ENCODE measurements at regions of chr2 and their contacts with region 1.

Region 1: DNA sequence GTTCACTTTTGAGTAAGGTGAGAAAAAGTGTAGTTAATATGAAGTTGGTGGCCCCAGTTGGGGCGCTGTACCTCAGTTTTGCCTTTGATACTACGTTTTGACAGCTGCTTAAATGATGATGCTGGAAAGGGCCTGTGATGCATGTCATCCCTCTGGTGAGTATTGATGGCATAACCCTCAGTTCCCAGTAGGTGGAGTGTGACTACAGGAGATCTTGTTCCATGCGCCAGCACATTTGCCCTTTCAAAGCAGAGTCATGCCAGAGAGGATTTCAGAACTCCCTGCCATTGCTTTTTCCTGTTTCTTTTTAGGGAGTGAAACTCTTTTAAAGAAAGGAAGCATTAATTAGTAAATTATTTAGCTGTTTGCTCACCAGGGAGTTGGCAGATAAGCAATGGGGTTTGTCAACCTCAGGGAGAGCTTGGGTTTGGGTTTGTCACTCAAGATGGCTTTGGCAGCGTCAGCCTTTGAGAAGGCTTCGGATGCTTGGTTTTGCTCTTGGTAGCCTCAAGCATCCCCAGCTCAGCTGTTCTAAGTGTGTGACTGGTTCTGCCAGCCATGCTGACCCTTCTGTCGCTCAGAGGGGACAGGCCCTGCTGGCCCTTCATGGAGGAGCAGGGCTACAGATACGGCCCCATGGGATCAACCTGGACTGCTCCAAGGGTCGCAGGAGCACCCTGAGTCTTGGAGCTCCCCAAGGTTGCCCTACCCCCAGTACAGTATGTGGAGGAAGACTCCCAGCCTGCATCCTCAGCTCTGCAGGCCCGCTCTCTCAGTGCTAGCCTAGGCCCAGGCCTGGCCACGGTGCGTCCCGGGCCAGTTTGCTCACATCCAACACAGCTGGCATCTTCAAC is 29.1 kb downstream of the ARMC9 start:
- DNase-seq: peak; percentile 70 to 76 (median 73)
- ATAC-seq: peak; percentile 98
- H3K4me3 ChIP-seq: no peak overlapping the region
- H3K27ac ChIP-seq: no peak overlapping the region
- H3K4me1 ChIP-seq: no peaks in the 10 kb centered on the region
- H3K27me3 ChIP-seq: no peaks in the 10 kb centered on the region
- CTCF ChIP-seq: peak; percentile 76 to 85 (median 77)
- EP300 ChIP-seq: no peak
- POLR2A ChIP-seq: no peak
- RAD21 ChIP-seq: peak; percentile 79 to 91

Region 2: GRCh38 chr2:231084565-231084964 is 143.0 kb before region 1 on chr2:
- CTCF ChIA-PET with region 1: no interaction called
- POLR2A ChIA-PET with region 1: no interaction called
- in situ Hi-C with region 1: no loop called
- intact Hi-C with region 1: no loop called
- DNase-seq: no peak
- ATAC-seq: no peak
- H3K4me3 ChIP-seq: no peak overlapping the region
- H3K27ac ChIP-seq: no peak overlapping the region
- H3K4me1 ChIP-seq: no peaks in the 10 kb centered on the region
- H3K27me3 ChIP-seq: no peaks in the 10 kb centered on the region
- CTCF ChIP-seq: no peak
- EP300 ChIP-seq: no peak
- POLR2A ChIP-seq: no peak
- RAD21 ChIP-seq: no peak

Region 3: DNA sequence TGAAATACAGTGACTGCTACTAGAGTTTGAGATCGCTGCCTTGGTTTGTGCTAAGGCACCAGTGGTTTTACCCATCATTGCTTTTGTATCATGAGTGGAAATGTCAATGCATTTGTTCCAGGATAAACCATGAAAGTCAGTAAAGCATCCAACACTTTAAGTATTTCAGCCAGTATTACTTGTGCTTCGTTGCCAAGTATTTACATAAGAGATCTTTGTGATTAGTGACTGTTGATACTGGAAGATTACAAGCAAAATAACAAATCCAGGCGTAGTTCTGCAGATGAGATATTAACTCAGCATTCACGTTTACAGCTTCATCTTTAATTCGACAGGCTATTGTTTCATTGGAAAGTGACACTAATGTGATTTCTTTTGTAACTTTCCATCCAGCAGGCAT is 77.7 kb after region 1 on chr2:
- CTCF ChIA-PET with region 1: no interaction called
- POLR2A ChIA-PET with region 1: no interaction called
- in situ Hi-C with region 1: no loop called
- intact Hi-C with region 1: loop called (anchors 2 kb)
- DNase-seq: no peak
- ATAC-seq: no peak
- H3K4me3 ChIP-seq: no peak overlapping the region
- H3K27ac ChIP-seq: no peak overlapping the region
- H3K4me1 ChIP-seq: no peaks in the 10 kb centered on the region
- H3K27me3 ChIP-seq: peaks cover 9 to 24% of the 10 kb centered on the region in 2 experiments; a peak in 3 of 5 replicates
- CTCF ChIP-seq: no peak
- EP300 ChIP-seq: no peak
- POLR2A ChIP-seq: no peak
- RAD21 ChIP-seq: no peak

Region 4: DNA sequence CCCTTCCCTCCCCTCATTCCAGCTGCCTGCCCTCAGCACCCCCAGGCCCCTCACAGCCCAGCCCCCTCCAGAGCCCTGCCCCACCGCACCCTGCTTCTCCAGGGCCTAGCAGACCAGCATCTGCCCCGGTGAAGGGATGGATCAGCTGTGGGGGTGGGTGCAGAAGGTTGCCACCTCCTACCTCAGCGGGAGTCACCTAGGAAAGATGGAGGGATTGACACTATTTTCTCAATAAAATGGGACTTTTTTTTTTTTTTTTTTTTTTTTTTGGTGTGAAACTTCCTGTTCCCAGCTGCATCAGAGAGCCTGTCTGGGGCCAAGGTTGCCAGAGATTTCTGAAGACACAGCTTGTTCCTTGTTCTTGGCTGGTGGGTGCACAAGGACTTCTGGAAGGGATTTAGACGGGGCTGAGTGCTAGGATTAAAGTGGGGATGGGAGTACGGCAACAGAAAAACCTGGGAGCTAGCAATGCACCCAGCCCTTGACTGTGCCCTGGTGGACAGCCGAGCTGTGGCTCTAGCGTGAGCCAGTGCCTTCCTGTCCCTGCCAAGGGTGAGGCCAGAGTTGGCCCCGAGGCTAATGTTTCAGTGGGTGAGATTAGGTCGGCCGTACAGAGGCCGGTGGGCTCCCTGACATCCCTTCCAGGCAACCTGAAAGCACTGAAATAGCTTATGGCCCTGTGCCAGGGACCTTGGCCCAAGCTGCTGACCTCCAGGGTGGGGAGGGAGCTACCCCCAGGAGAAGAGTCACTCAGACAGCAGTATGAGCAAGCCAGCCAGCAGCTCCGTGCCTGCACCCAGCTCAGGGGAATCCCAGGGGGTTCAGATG is 172.5 kb after region 1 on chr2:
- CTCF ChIA-PET with region 1: no interaction called
- POLR2A ChIA-PET with region 1: no interaction called
- in situ Hi-C with region 1: no loop called
- intact Hi-C with region 1: loop called (anchors 5 kb)
- DNase-seq: peak in 1 of 4 experiments; percentile 36
- ATAC-seq: peak; percentile 72
- H3K4me3 ChIP-seq: no peak overlapping the region
- H3K27ac ChIP-seq: no peak overlapping the region; the same call in 2 of the 3 replicates
- H3K4me1 ChIP-seq: peaks cover 4 to 12% of the 10 kb centered on the region in 2 experiments; a peak in 4 of 5 replicates
- H3K27me3 ChIP-seq: peaks cover 0 to 16% of the 10 kb centered on the region in 2 experiments; a peak in 2 of 5 replicates
- CTCF ChIP-seq: no peak
- EP300 ChIP-seq: no peak
- POLR2A ChIP-seq: no peak
- RAD21 ChIP-seq: no peak

Region 5: GRCh38 chr2:231452799-231453508 is 225.4 kb after region 1 on chr2:
- CTCF ChIA-PET with region 1: interaction called, 15 read pairs
- POLR2A ChIA-PET with region 1: interaction called, 10 read pairs
- in situ Hi-C with region 1: loop called (anchors 10 kb)
- intact Hi-C with region 1: loop called (anchors 1 kb)
- DNase-seq: peak in 1 of 4 experiments; percentile 33
- ATAC-seq: peak; percentile 60
- H3K4me3 ChIP-seq: no peak overlapping the region
- H3K27ac ChIP-seq: no peak overlapping the region; the same call in 2 of the 3 replicates
- H3K4me1 ChIP-seq: no peaks in the 10 kb centered on the region; a peak in 1 of 5 replicates
- H3K27me3 ChIP-seq: no peaks in the 10 kb centered on the region
- CTCF ChIP-seq: no peak
- EP300 ChIP-seq: no peak
- POLR2A ChIP-seq: peak; percentile 69; the same call in 1 of the 2 replicates
- RAD21 ChIP-seq: no peak

Region 6: DNA sequence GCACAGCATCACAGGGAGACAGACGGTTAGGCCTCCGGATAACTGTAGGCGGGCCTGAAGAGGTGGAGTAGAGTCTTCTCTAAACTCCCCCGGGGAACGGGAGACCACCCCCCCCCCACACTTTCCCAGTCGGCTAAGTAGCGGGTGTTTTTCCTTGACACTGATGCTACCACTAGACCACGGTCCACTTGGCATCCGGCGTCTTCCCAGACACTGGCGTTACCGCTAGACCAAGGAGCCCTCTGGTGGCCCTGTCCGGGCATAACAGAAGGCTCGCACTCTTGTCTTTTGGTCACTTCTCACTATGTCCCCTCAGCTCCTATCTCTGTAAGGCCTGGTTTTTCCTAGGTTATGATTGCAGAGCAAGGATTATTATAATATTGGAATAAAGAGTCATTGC is 262.5 kb after region 1 on chr2:
- CTCF ChIA-PET with region 1: no interaction called
- POLR2A ChIA-PET with region 1: no interaction called
- in situ Hi-C with region 1: no loop called
- intact Hi-C with region 1: loop called (anchors 2 kb)
- DNase-seq: peak in 1 of 4 experiments; percentile 22
- ATAC-seq: peak; percentile 61; the same call in 2 of the 3 replicates
- H3K4me3 ChIP-seq: no peak overlapping the region
- H3K27ac ChIP-seq: no peak overlapping the region
- H3K4me1 ChIP-seq: no peaks in the 10 kb centered on the region
- H3K27me3 ChIP-seq: no peaks in the 10 kb centered on the region
- CTCF ChIP-seq: peak; percentile 45 to 48 (median 46); a peak in 4 of 6 replicates
- EP300 ChIP-seq: no peak
- POLR2A ChIP-seq: no peak
- RAD21 ChIP-seq: peak in 1 of 2 experiments; percentile 53; a peak in 2 of 4 replicates

Region 7: DNA sequence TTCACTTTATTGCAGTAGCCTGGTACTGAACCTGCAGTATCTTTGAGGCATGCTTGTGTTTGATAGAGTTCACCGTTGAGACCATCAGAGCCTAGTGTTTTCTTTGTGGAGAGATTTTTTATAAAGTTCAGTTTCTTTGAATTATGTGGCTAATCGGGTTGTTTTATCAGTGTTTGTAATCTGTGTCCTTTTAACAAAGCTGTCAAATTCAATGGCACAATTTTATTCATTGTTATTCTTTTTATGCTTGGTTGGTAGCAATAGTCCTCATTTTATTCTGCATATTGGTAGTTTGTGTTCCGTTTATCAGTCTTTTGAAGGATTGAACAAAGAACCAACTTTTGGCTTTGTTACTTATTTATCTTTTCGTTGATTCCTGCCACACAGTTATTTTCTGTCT is 1599.8 kb after region 1 on chr2:
- CTCF ChIA-PET with region 1: no interaction called
- POLR2A ChIA-PET with region 1: no interaction called
- in situ Hi-C with region 1: no loop called
- intact Hi-C with region 1: no loop called
- DNase-seq: no peak
- ATAC-seq: no peak
- H3K4me3 ChIP-seq: no peak overlapping the region
- H3K27ac ChIP-seq: no peak overlapping the region
- H3K4me1 ChIP-seq: no peaks in the 10 kb centered on the region
- H3K27me3 ChIP-seq: no peaks in the 10 kb centered on the region
- CTCF ChIP-seq: no peak
- EP300 ChIP-seq: no peak
- POLR2A ChIP-seq: no peak
- RAD21 ChIP-seq: no peak